IMR-90 (cell line): ENCODE measurements at regions of chr11 and their contacts with region 1.

Region 1: GRCh38 chr11:46121724-46122477 is 647 bp upstream of the PHF21A start:
- DNase-seq: peak; percentile 95
- ATAC-seq: peak; percentile 62
- H3K4me3 ChIP-seq: peak overlapping the region; percentile 68
- H3K27ac ChIP-seq: peak overlapping the region; percentile 79
- H3K4me1 ChIP-seq: no peaks in the 10 kb centered on the region
- H3K27me3 ChIP-seq: no peaks in the 10 kb centered on the region
- CTCF ChIP-seq: no peak
- POLR2A ChIP-seq: no peak
- RAD21 ChIP-seq: no peak

Region 2: GRCh38 chr11:45485070-45485707 is 636.7 kb before region 1 on chr11:
- CTCF ChIA-PET with region 1: no interaction called
- POLR2A ChIA-PET with region 1: no interaction called
- dilution Hi-C with region 1: no loop called
- in situ Hi-C with region 1: no loop called
- intact Hi-C with region 1: no loop called
- DNase-seq: no peak
- ATAC-seq: no peak
- H3K4me3 ChIP-seq: no peak overlapping the region
- H3K27ac ChIP-seq: no peak overlapping the region
- H3K4me1 ChIP-seq: no peaks in the 10 kb centered on the region
- H3K27me3 ChIP-seq: peaks cover 2% of the 10 kb centered on the region; the same call in 1 of the 2 replicates
- CTCF ChIP-seq: no peak
- POLR2A ChIP-seq: no peak
- RAD21 ChIP-seq: no peak

Region 3: DNA sequence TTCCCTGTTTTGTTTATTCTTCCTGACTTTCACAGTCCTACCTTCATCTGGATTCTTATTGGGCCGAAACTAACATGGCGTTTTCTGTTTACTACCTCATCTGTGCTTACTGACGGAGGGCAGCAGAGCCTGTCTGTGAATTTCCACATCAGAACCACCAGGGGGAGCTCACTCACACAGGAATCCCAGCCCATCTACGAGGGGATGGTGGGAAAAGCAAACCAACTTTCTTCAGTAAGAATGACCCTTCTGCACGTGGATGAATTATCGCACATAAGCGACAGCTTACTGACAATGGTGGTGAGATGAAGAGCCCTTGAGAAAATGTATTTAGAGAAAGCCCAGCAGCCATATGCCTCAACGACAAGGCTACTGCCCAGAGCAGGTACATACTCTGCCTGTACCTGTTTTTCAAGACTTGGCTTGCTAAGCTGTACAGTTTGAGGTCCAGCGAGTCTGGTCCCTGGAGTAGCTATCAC is 157.0 kb before region 1 on chr11:
- CTCF ChIA-PET with region 1: interaction called, 6 read pairs
- POLR2A ChIA-PET with region 1: no interaction called
- dilution Hi-C with region 1: no loop called
- in situ Hi-C with region 1: no loop called
- intact Hi-C with region 1: loop called (anchors 5 kb)
- DNase-seq: peak; percentile 80
- ATAC-seq: peak; percentile 99
- H3K4me3 ChIP-seq: no peak overlapping the region
- H3K27ac ChIP-seq: no peak overlapping the region
- H3K4me1 ChIP-seq: peaks cover 2% of the 10 kb centered on the region; the same call in 1 of the 2 replicates
- H3K27me3 ChIP-seq: no peaks in the 10 kb centered on the region
- CTCF ChIP-seq: peak; percentile 90
- POLR2A ChIP-seq: no peak
- RAD21 ChIP-seq: peak; percentile 89

Region 4: DNA sequence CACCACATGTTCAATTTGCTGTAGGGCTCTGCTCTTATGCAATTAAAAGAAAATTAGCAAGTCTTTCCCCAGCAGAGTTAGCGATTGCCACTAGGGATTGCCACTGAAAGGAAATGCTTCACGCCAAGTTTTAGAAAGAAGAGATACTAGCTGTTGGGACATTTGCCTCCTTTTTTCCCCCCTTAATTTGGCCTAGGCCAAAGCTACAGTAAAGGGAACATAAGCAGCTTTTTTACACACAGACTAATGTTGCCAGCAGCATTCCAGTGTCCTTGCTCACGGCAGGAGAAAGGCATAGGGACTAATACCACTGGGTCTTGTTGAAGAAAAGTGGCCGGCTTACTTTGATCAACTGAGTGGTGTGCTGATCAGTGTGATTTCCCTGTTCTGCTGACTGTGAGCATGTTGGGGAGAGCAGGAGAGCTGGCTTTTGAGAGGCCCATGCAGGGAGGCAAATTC is 71.9 kb before region 1 on chr11:
- CTCF ChIA-PET with region 1: interaction called, 9 read pairs
- POLR2A ChIA-PET with region 1: no interaction called
- dilution Hi-C with region 1: no loop called
- in situ Hi-C with region 1: no loop called
- intact Hi-C with region 1: loop called (anchors 5 kb)
- DNase-seq: peak; percentile 85
- ATAC-seq: peak; percentile 92
- H3K4me3 ChIP-seq: no peak overlapping the region
- H3K27ac ChIP-seq: peak overlapping the region; percentile 5
- H3K4me1 ChIP-seq: peaks cover 18% of the 10 kb centered on the region
- H3K27me3 ChIP-seq: no peaks in the 10 kb centered on the region
- CTCF ChIP-seq: no peak
- POLR2A ChIP-seq: no peak
- RAD21 ChIP-seq: no peak

Region 5: GRCh38 chr11:46075168-46075567 is 46.7 kb before region 1 on chr11:
- CTCF ChIA-PET with region 1: no interaction called
- POLR2A ChIA-PET with region 1: no interaction called
- dilution Hi-C with region 1: no loop called
- in situ Hi-C with region 1: no loop called
- intact Hi-C with region 1: loop called (anchors 5 kb)
- DNase-seq: peak; percentile 84
- ATAC-seq: peak; percentile 77
- H3K4me3 ChIP-seq: no peak overlapping the region
- H3K27ac ChIP-seq: no peak overlapping the region
- H3K4me1 ChIP-seq: no peaks in the 10 kb centered on the region
- H3K27me3 ChIP-seq: no peaks in the 10 kb centered on the region
- CTCF ChIP-seq: no peak
- POLR2A ChIP-seq: no peak
- RAD21 ChIP-seq: no peak

Region 6: GRCh38 chr11:46308631-46309419 is 186.9 kb after region 1 on chr11:
- CTCF ChIA-PET with region 1: no interaction called
- POLR2A ChIA-PET with region 1: no interaction called
- dilution Hi-C with region 1: no loop called
- in situ Hi-C with region 1: loop called (anchors 25 kb)
- intact Hi-C with region 1: loop called (anchors 5 kb)
- DNase-seq: peak; percentile 61
- ATAC-seq: peak; percentile 84
- H3K4me3 ChIP-seq: no peak overlapping the region
- H3K27ac ChIP-seq: no peak overlapping the region
- H3K4me1 ChIP-seq: peaks cover 11% of the 10 kb centered on the region
- H3K27me3 ChIP-seq: no peaks in the 10 kb centered on the region
- CTCF ChIP-seq: peak; percentile 81
- POLR2A ChIP-seq: peak; percentile 37; the same call in 1 of the 2 replicates
- RAD21 ChIP-seq: peak; percentile 89